B cell (primary cell): ENCODE measurements at regions of chr3 and their contacts with region 1.

Region 1: GRCh38 chr3:129576514-129577352 is 29.7 kb downstream of the PLXND1 start:
- DNase-seq: peak; percentile 85
- ATAC-seq: peak; percentile 71
- H3K4me3 ChIP-seq: peak overlapping the region in 1 of 5 experiments; percentile 40
- H3K4me3 Mint-ChIP-seq: peak overlapping the region; percentile 83
- H3K27ac ChIP-seq: peak overlapping the region; percentile 69 to 83
- H3K27ac Mint-ChIP-seq: peak overlapping the region; percentile 98
- H3K4me1 ChIP-seq: peaks cover 50 to 59% of the 10 kb centered on the region in 2 donors
- H3K4me1 Mint-ChIP-seq: peaks cover 70% of the 10 kb centered on the region
- H3K27me3 ChIP-seq: no peaks in the 10 kb centered on the region
- H3K27me3 Mint-ChIP-seq: no peaks in the 10 kb centered on the region
- CTCF ChIP-seq: no peak

Region 2: DNA sequence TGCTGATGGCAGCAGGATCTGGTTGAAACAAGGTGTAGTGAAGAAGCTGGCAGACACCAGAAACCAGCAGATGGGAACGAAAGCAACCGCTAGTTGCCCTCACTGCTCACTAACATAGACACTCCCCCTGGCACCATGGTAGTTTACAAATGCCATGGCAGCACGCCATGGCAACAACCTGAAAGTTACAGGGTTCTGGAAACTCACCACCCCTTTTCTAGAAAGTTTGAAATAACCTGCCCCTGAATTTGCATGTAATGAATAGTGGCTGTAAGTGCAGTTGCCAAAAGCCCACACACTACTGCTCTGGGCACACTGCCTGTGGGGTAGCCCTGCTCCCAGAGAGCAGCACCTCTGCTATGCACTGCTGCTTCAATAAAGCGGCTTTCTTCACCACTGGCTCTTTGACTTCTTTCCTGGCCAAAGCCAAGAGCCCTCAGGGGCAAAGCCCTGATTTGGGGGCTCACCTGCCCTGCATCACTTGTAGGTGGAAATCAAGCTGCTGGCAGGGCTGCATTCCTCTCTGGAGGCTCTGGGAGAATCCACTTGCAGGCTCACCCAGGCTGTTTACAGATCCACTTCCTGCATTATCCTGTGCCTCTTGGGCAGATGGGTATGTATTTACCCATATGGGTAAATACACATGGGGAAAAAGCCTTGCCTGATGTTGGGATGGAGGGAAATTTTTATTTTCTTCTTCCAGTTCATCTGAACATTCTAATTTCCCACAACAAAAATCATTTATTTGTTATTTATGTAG is 518.1 kb before region 1 on chr3:
- CTCF ChIA-PET with region 1: no interaction called
- POLR2A ChIA-PET with region 1: no interaction called
- intact Hi-C with region 1: no loop called
- DNase-seq: peak; percentile 53
- ATAC-seq: peak; percentile 45
- H3K4me3 ChIP-seq: no peak overlapping the region
- H3K4me3 Mint-ChIP-seq: no peak overlapping the region
- H3K27ac ChIP-seq: no peak overlapping the region
- H3K27ac Mint-ChIP-seq: no peak overlapping the region
- H3K4me1 ChIP-seq: peaks cover 5 to 21% of the 10 kb centered on the region in 2 donors
- H3K4me1 Mint-ChIP-seq: peaks cover 10% of the 10 kb centered on the region
- H3K27me3 ChIP-seq: peaks cover 0 to 29% (median 7%) of the 10 kb centered on the region in 4 experiments
- H3K27me3 Mint-ChIP-seq: peaks cover 35% of the 10 kb centered on the region
- CTCF ChIP-seq: no peak

Region 3: DNA sequence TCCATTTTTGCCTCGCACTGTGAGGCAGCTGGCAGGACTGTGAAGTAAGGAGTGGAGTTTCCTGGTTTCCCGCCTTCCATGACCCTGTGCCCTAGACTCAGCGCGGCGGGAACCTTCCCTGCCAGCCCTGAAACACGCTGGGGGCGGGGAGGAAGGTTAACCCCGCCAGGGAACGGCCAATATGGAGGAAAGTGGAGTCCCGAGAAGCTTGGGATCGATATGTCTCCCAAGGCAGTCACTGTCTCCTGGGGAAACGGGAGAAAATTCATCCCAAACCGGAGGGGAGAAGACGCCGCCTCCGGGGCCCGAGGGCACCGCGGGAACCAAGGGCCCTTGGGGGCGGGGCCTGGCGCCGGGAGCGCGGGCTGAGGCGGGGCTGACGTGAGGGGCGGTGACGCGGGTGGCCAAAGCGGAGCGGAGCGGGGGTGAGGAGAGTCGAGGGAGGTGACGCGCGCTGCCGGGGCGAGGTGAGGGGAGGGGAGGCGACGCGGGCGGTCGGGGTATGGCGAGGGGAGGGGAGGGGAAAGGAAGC is 298.2 kb before region 1 on chr3 and contains the start of gene HMCES:
- CTCF ChIA-PET with region 1: no interaction called
- POLR2A ChIA-PET with region 1: no interaction called
- intact Hi-C with region 1: loop called (anchors 1 kb)
- DNase-seq: peak; percentile 94
- ATAC-seq: peak; percentile 72
- H3K4me3 ChIP-seq: peak within 1 kb of the TSS; percentile 79 to 92 (median 88)
- H3K4me3 Mint-ChIP-seq: peak within 1 kb of the TSS; percentile 95
- H3K27ac ChIP-seq: peak within 1 kb of the TSS; percentile 86
- H3K27ac Mint-ChIP-seq: peak within 1 kb of the TSS; percentile 91
- H3K4me1 ChIP-seq: peaks cover 67 to 73% of the 10 kb centered on the region in 2 donors
- H3K4me1 Mint-ChIP-seq: peaks cover 73% of the 10 kb centered on the region
- H3K27me3 ChIP-seq: peaks cover 0 to 4% (median 0%) of the 10 kb centered on the region in 4 experiments
- H3K27me3 Mint-ChIP-seq: peaks cover 5% of the 10 kb centered on the region
- CTCF ChIP-seq: no peak
- total RNA-seq, gene HMCES: 22.1 and 22.5 TPM in 2 replicates

Region 4: GRCh38 chr3:129526121-129526900 is 50.4 kb before region 1 on chr3:
- CTCF ChIA-PET with region 1: interaction called, 8 read pairs
- POLR2A ChIA-PET with region 1: interaction called, 13 read pairs
- intact Hi-C with region 1: loop called (anchors 1 kb)
- DNase-seq: peak; percentile 86
- ATAC-seq: peak; percentile 100
- H3K4me3 ChIP-seq: no peak overlapping the region
- H3K4me3 Mint-ChIP-seq: peak overlapping the region; percentile 5
- H3K27ac ChIP-seq: peak overlapping the region; percentile 23 to 44
- H3K27ac Mint-ChIP-seq: peak overlapping the region; percentile 91
- H3K4me1 ChIP-seq: peaks cover 10 to 21% of the 10 kb centered on the region in 2 donors
- H3K4me1 Mint-ChIP-seq: peaks cover 21% of the 10 kb centered on the region
- H3K27me3 ChIP-seq: peaks cover 0 to 2% (median 0%) of the 10 kb centered on the region in 4 experiments
- H3K27me3 Mint-ChIP-seq: no peaks in the 10 kb centered on the region
- CTCF ChIP-seq: no peak

Region 5: GRCh38 chr3:129606636-129607390 is 30.1 kb after region 1 on chr3 and contains the start of gene PLXND1:
- CTCF ChIA-PET with region 1: interaction called, 18 read pairs
- POLR2A ChIA-PET with region 1: interaction called, 55 read pairs
- intact Hi-C with region 1: loop called (anchors 1 kb)
- DNase-seq: peak; percentile 57
- ATAC-seq: peak; percentile 78
- H3K4me3 ChIP-seq: peak within 1 kb of the TSS in 4 of 5 experiments; percentile 48 to 55 (median 53)
- H3K4me3 Mint-ChIP-seq: peak within 1 kb of the TSS; percentile 95
- H3K27ac ChIP-seq: no peak within 1 kb of the TSS
- H3K27ac Mint-ChIP-seq: peak within 1 kb of the TSS; percentile 89
- H3K4me1 ChIP-seq: peaks cover 16 to 19% of the 10 kb centered on the region in 2 donors
- H3K4me1 Mint-ChIP-seq: peaks cover 18% of the 10 kb centered on the region
- H3K27me3 ChIP-seq: peaks cover 0 to 37% (median 14%) of the 10 kb centered on the region in 4 experiments
- H3K27me3 Mint-ChIP-seq: peaks cover 20% of the 10 kb centered on the region
- CTCF ChIP-seq: no peak
- total RNA-seq, gene PLXND1: 74.4 and 89.8 TPM in 2 replicates

Region 6: DNA sequence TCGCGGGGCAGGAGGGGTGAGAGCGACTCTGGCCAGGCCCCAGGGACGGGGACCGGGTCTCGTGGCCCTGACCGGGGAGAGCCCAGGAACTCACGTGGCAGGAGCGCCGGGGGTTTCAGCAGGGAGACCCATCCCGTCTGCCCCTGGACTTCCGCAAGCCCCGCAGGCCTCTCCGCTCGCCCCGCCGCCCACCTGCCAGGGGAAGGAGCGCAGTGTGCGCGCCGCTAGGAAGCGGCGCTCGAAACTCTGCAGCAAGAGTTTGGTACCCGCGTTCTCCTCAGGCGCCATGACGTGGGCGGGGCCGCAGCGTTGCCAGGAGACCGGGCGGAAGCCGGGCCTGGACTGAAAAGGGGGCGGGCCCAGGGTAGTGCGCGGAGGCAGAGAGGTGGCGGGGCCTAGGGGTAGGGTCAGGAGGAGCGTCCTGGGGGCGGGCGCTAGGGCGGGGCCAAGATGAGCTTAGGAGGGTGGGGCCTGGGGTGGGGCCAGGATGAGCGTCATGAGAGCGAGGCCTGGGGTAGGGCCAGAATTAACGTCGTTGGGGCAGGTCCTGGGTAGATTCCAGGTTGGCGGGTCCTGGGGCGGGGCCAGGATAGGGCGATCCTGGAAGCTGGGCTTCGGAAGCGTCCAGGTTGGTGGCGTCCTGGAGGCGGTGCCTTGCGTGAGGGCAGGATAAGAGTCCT is 534.6 kb after region 1 on chr3:
- CTCF ChIA-PET with region 1: no interaction called
- POLR2A ChIA-PET with region 1: no interaction called
- intact Hi-C with region 1: loop called (anchors 5 kb)
- DNase-seq: peak; percentile 98
- ATAC-seq: peak; percentile 100
- H3K4me3 ChIP-seq: peak overlapping the region in 4 of 5 experiments; percentile 69 to 86 (median 77)
- H3K4me3 Mint-ChIP-seq: peak overlapping the region; percentile 99
- H3K27ac ChIP-seq: peak overlapping the region; percentile 88
- H3K27ac Mint-ChIP-seq: peak overlapping the region; percentile 100
- H3K4me1 ChIP-seq: peaks cover 0 to 10% of the 10 kb centered on the region in 2 donors
- H3K4me1 Mint-ChIP-seq: peaks cover 14% of the 10 kb centered on the region
- H3K27me3 ChIP-seq: no peaks in the 10 kb centered on the region
- H3K27me3 Mint-ChIP-seq: no peaks in the 10 kb centered on the region
- CTCF ChIP-seq: no peak